ENCODE measurements at regions of chr5 and their contacts with region 1.

Region 1: GRCh38 chr5:122704243-122705036 is 70.4 kb upstream of the SNX2 start:
- DNase-seq: no peak
- H3K4me3 Mint-ChIP-seq: no peak overlapping the region
- H3K27ac Mint-ChIP-seq: no peak overlapping the region
- H3K4me1 Mint-ChIP-seq: peaks cover 5% of the 10 kb centered on the region
- H3K27me3 Mint-ChIP-seq: peaks cover 2% of the 10 kb centered on the region

Region 2: DNA sequence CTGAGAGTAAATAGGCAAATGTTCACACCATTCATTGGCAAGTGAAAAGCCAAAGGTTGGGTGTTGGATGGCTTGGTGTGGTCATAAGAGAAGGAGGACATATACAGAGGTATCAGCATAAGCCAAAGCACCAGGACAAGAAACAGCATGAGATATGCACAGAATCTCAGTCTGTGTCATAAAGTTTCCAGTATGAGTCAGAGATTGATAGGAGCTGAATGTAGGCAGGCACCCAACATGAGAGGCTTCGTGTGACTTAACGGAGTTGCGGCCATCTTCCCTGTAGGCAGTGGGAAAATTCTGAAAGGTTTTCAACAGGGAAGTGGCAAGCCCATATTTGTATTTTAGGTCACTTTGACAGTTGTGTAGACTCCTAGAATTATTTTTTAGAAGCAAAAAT is 337.9 kb before region 1 on chr5:
- intact Hi-C with region 1: no loop called
- DNase-seq: no peak
- H3K4me3 Mint-ChIP-seq: no peak overlapping the region
- H3K27ac Mint-ChIP-seq: no peak overlapping the region
- H3K4me1 Mint-ChIP-seq: no peaks in the 10 kb centered on the region
- H3K27me3 Mint-ChIP-seq: no peaks in the 10 kb centered on the region

Region 3: DNA sequence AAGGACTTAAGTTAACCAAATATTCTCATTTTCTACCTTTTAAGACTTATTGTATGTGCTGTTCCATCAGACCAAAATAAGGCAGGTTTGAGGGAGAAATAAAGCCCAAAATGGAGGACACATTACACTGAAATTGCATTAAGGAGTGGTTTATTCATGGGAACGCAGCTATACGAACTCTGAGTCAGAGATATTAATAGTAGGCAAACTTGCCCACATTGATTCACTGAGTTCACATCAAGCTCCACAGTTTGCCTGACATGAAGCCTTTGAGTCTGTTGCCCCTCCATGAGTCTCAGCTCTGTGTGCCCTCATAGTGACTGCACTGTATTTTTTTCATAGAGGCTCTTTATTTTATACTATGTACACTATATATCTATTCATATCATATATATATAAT is 64.6 kb before region 1 on chr5:
- intact Hi-C with region 1: no loop called
- DNase-seq: no peak
- H3K4me3 Mint-ChIP-seq: no peak overlapping the region
- H3K27ac Mint-ChIP-seq: no peak overlapping the region
- H3K4me1 Mint-ChIP-seq: no peaks in the 10 kb centered on the region
- H3K27me3 Mint-ChIP-seq: no peaks in the 10 kb centered on the region

Region 4: DNA sequence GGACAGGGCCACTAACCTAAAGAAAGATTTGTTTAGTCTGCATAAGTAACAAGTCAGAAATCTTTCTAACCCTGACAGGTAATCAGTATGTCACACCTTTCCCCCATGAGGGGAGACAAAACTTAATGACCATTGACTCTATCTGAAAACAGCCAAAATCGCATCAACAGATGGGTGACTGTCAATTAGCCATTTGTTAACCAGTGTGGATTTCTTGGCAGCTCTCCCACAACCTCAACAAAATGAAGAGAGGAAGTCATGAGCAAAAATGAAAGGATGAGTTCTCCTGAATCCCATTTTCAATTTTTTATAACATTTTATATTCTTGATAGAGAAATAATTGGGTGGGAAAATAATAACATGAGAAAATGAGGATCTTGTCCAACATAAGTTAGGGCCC is 14.2 kb before region 1 on chr5:
- intact Hi-C with region 1: no loop called
- DNase-seq: no peak
- H3K4me3 Mint-ChIP-seq: no peak overlapping the region
- H3K27ac Mint-ChIP-seq: no peak overlapping the region
- H3K4me1 Mint-ChIP-seq: no peaks in the 10 kb centered on the region
- H3K27me3 Mint-ChIP-seq: peaks cover 3% of the 10 kb centered on the region

Region 5: GRCh38 chr5:122845229-122846050 is 141.0 kb after region 1 on chr5 and contains the start of gene SNX24:
- intact Hi-C with region 1: loop called (anchors 10 kb)
- DNase-seq: peak; percentile 64
- H3K4me3 Mint-ChIP-seq: peak within 1 kb of the TSS; percentile 77
- H3K27ac Mint-ChIP-seq: no peak within 1 kb of the TSS
- H3K4me1 Mint-ChIP-seq: peaks cover 20% of the 10 kb centered on the region
- H3K27me3 Mint-ChIP-seq: peaks cover 22% of the 10 kb centered on the region
- total RNA-seq, gene SNX24: 1.3 and 1.7 TPM in 2 replicates

Region 6: DNA sequence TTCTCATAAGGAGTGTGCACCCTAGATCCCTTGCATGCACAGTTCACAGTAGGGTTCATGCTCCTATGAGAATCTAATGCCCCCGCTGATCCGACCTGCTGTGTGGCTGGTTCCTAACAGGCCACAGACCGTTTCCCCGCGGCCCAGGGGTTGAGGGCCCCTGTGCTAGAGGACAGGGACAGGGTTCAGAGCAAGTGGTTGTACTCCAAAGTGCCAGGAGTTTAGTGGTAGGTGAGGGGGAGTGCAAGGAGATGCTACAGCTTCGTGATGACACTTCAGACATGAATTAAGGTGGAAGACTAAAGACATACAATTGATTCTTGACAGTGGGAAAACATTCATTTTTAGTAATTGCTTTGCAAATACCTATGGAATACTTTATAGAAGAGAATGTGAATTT is 181.5 kb after region 1 on chr5:
- intact Hi-C with region 1: no loop called
- DNase-seq: no peak
- H3K4me3 Mint-ChIP-seq: no peak overlapping the region
- H3K27ac Mint-ChIP-seq: no peak overlapping the region
- H3K4me1 Mint-ChIP-seq: peaks cover 2% of the 10 kb centered on the region
- H3K27me3 Mint-ChIP-seq: peaks cover 5% of the 10 kb centered on the region

Region 7: GRCh38 chr5:122999945-123000563 is 295.6 kb after region 1 on chr5:
- intact Hi-C with region 1: loop called (anchors 5 kb)
- DNase-seq: peak; percentile 13
- H3K4me3 Mint-ChIP-seq: no peak overlapping the region
- H3K27ac Mint-ChIP-seq: no peak overlapping the region
- H3K4me1 Mint-ChIP-seq: no peaks in the 10 kb centered on the region
- H3K27me3 Mint-ChIP-seq: no peaks in the 10 kb centered on the region